OCI-LY7 (cell line): ENCODE measurements at regions of chr14 and their contacts with region 1.

Region 1: DNA sequence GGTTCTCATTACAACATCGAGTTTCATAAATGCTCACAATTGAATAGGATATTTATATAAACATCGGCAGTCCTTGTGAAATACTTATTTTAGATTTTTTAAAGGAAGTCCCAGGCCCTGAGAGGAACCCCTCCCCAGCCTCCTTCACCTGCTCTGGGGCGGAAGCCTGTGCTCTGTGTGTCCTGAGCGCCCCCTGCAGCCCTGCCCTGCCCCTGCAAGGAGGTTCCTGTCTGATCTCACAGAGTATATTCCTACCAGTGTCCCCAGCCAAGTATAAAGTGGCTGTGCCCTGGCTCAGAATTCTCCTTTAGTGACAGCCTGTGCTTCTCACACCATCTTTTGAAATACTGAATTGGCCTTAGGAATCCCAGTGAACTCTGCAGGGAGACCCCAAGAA is 659.5 kb downstream of the TMEM121 start:
- DNase-seq: peak; percentile 87
- H3K4me3 ChIP-seq: peak overlapping the region; percentile 71
- H3K27ac ChIP-seq: peak overlapping the region; percentile 99
- H3K4me1 ChIP-seq: peaks cover 49% of the 10 kb centered on the region
- CTCF ChIP-seq: peak; percentile 74

Region 2: GRCh38 chr14:105861985-105862465 is 323.8 kb before region 1 on chr14:
- CTCF ChIA-PET with region 1: no interaction called
- POLR2A ChIA-PET with region 1: interaction called, 22 read pairs
- intact Hi-C with region 1: no loop called
- DNase-seq: peak; percentile 98
- H3K4me3 ChIP-seq: peak overlapping the region; percentile 100
- H3K27ac ChIP-seq: peak overlapping the region; percentile 100
- H3K4me1 ChIP-seq: peaks cover 5% of the 10 kb centered on the region
- CTCF ChIP-seq: no peak